ENCODE measurements at regions of chr1 and their contacts with region 1.

Region 1: DNA sequence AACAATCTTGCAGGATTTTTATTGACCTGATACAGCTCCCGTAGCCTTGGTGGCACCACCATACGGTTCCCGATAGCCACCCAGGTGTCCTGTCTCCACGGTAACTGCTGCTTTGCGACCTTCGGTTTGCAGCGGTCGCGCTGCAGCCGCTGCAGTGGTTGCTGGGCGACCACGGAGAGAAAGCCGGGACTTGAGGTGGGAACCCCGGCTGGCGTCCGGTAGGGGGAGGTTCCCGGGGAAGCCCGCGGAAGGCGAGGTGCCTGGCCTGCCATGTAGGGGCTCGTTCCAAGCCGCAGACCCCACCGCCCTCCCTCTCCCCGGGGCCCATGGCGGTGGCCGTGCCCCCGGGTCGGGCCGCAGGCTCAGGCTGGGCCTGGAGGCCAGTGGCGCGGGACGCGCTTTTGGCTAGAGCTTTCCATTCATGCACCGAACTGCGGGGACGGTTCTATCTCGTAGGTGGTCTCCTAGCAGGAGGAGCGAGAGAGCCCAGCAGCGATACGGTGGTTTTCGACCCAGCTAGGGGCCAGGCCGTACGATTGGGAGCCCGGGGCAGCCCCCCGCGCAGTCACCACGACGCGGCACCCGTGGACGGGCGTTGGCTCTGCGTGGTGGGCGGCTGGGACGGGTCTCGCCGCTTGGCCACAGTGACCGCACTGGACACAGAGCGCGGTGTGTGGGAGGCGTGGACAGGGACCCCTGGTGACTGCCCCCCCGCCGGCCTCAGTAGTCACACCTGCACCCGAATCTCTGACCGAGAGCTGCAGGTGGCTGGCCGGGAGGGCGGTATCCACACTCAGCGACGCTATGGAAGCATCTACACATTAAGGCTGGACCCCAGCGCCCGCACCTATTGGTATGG is at the start of gene KLHDC9:
- DNase-seq: peak; percentile 51 to 81 (median 64)
- H3K4me3 ChIP-seq: peak within 1 kb of the TSS; percentile 85
- H3K4me3 Mint-ChIP-seq: peak within 1 kb of the TSS; percentile 83 to 92 (median 86)
- H3K27ac ChIP-seq: peak within 1 kb of the TSS; percentile 32
- H3K27ac Mint-ChIP-seq: peak within 1 kb of the TSS; percentile 77 to 99 (median 96)
- H3K4me1 ChIP-seq: peaks cover 8% of the 10 kb centered on the region
- H3K4me1 Mint-ChIP-seq: peaks cover 17 to 26% (median 19%) of the 10 kb centered on the region in 3 donors
- H3K27me3 ChIP-seq: no peaks in the 10 kb centered on the region
- H3K27me3 Mint-ChIP-seq: peaks cover 0 to 19% of the 10 kb centered on the region in 2 donors
- total RNA-seq, gene KLHDC9: 0.42 to 0.49 TPM

Region 2: DNA sequence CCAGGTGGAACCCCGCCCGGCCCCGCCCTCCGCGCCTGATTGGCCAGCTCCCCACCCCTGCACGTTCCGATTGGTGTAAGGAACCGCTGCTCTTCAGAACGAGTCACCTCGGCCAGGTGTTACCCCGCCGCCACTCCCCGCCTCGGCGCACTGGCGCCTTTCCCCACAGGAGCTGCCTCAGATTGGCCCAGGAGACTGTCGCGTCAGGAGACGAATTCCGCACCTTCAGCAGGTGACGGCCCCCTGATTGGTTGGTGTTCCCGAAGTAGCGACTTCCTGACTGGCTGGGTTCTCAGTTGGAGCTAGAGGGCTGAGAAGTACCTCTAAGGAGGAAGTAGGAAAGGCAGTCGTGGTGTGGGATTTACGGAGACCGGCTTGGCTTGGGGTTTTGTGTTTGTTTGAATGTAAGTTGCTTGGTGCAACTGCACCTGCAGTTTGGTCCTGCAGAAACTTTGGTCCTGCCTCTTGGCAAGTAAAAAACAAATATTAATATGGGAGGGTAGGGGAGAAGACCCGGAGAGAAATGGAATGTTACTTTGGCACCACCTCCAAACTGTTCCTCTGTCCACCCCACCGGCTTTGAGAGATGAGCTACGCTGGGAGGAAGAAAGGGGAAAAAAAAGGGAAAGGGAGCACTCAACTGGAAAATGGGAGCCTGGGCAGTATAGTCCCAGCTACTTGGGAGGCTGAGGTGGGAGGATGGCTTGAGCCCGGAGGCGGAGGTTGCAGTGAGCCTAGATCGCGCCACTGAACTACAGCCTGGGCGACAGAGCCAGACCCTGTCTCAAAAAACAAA is 77.1 kb before region 1 on chr1:
- CTCF ChIA-PET with region 1: interaction called, 15 read pairs
- POLR2A ChIA-PET with region 1: interaction called, 3 read pairs
- DNase-seq: peak; percentile 85 to 95 (median 91)
- H3K4me3 ChIP-seq: peak overlapping the region; percentile 99
- H3K4me3 Mint-ChIP-seq: peak overlapping the region; percentile 85 to 94 (median 91)
- H3K27ac ChIP-seq: peak overlapping the region; percentile 71
- H3K27ac Mint-ChIP-seq: peak overlapping the region; percentile 66 to 97 (median 95)
- H3K4me1 ChIP-seq: peaks cover 26% of the 10 kb centered on the region
- H3K4me1 Mint-ChIP-seq: peaks cover 19 to 60% (median 40%) of the 10 kb centered on the region in 3 donors
- H3K27me3 ChIP-seq: no peaks in the 10 kb centered on the region
- H3K27me3 Mint-ChIP-seq: no peaks in the 10 kb centered on the region

Region 3: DNA sequence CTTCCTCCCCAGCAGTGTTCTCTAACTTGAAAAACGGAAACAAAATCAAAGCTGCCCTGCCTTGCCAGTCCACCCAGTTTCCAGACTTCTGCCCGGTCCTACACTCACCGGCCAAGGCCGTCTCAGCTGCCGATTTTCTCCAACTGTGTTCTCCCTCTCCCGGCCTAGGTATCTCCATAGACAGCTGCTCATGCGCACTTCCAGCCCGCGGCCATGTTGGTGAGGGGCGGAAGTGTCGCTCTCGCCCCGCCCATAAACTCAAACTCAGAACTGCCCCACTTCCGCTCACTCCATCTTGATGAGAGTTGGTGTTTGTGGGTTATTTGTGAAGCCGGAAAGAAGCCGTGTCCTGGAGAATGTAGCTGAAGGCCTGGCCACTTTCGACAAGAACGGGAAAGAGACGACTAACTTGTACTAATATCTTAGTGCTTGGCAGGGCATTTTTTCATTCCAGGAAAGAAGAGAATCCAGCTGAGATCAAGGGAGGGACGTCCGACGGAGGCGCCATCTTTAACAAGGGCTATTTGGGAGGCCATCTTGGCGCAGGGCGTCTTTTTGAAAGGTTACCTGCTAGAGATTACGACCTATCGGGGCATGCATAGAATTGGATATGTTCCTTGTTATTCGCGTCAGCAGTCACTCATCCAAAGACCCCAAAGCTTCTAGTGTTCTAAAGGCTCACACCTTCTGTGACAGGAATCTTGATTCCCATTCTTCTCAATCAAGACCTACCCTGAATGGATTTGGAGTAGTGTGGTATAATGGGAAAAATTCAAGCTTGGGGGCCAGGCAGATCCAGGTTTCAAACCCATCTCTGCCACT is 52.5 kb before region 1 on chr1 and contains the start of gene USF1:
- CTCF ChIA-PET with region 1: interaction called, 83 read pairs
- POLR2A ChIA-PET with region 1: interaction called, 34 read pairs
- DNase-seq: peak; percentile 85 to 96 (median 93)
- H3K4me3 ChIP-seq: peak within 1 kb of the TSS; percentile 99
- H3K4me3 Mint-ChIP-seq: peak within 1 kb of the TSS; percentile 88 to 97 (median 92)
- H3K27ac ChIP-seq: peak within 1 kb of the TSS; percentile 94
- H3K27ac Mint-ChIP-seq: peak within 1 kb of the TSS; percentile 89 to 100 (median 99)
- H3K4me1 ChIP-seq: peaks cover 23% of the 10 kb centered on the region
- H3K4me1 Mint-ChIP-seq: peaks cover 32 to 62% (median 49%) of the 10 kb centered on the region in 3 donors
- H3K27me3 ChIP-seq: no peaks in the 10 kb centered on the region
- H3K27me3 Mint-ChIP-seq: no peaks in the 10 kb centered on the region
- total RNA-seq, gene USF1: 63.3 to 67.7 TPM

Region 4: GRCh38 chr1:161071886-161072371 is 26.5 kb before region 1 on chr1:
- CTCF ChIA-PET with region 1: interaction called, 128 read pairs
- POLR2A ChIA-PET with region 1: interaction called, 31 read pairs
- DNase-seq: peak in 4 of 5 donors; percentile 24 to 66 (median 41)
- H3K4me3 ChIP-seq: no peak overlapping the region
- H3K4me3 Mint-ChIP-seq: peak overlapping the region in 1 of 7 donors; percentile 59
- H3K27ac ChIP-seq: no peak overlapping the region
- H3K27ac Mint-ChIP-seq: peak overlapping the region in 7 of 8 donors; percentile 17 to 88 (median 70)
- H3K4me1 ChIP-seq: peaks cover 34% of the 10 kb centered on the region
- H3K4me1 Mint-ChIP-seq: peaks cover 33 to 42% (median 41%) of the 10 kb centered on the region in 3 donors
- H3K27me3 ChIP-seq: no peaks in the 10 kb centered on the region
- H3K27me3 Mint-ChIP-seq: peaks cover 0 to 2% of the 10 kb centered on the region in 2 donors

Region 5: DNA sequence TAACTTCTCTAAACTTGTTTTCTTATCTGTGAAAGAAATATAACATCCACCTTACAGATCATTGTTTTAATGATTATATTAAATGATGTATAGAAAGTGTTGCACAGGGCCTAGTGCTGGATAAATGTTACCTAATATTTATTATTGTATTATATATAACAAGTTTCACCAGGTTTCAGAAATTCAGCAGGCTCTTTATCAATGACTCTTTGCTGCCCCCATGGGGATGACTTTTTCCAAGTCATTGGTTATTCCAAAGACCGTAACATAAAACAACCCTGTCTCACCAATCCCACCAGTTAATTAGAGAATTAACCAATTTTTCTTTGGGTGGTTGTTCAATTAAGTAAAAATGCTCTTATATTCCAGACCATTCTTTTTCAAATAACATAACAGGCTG is 41.3 kb after region 1 on chr1:
- CTCF ChIA-PET with region 1: interaction called, 24 read pairs
- POLR2A ChIA-PET with region 1: interaction called, 4 read pairs
- DNase-seq: peak in 2 of 5 donors; percentile 18 to 48
- H3K4me3 ChIP-seq: no peak overlapping the region
- H3K4me3 Mint-ChIP-seq: no peak overlapping the region
- H3K27ac ChIP-seq: no peak overlapping the region
- H3K27ac Mint-ChIP-seq: no peak overlapping the region
- H3K4me1 ChIP-seq: no peaks in the 10 kb centered on the region
- H3K4me1 Mint-ChIP-seq: peaks cover 4 to 8% (median 6%) of the 10 kb centered on the region in 3 donors
- H3K27me3 ChIP-seq: no peaks in the 10 kb centered on the region
- H3K27me3 Mint-ChIP-seq: no peaks in the 10 kb centered on the region

Region 6: GRCh38 chr1:161374373-161374772 is 275.9 kb after region 1 on chr1:
- CTCF ChIA-PET with region 1: no interaction called
- POLR2A ChIA-PET with region 1: no interaction called
- DNase-seq: no peak
- H3K4me3 ChIP-seq: no peak overlapping the region
- H3K4me3 Mint-ChIP-seq: no peak overlapping the region
- H3K27ac ChIP-seq: no peak overlapping the region
- H3K27ac Mint-ChIP-seq: peak overlapping the region in 1 of 8 donors; percentile 80
- H3K4me1 ChIP-seq: no peaks in the 10 kb centered on the region
- H3K4me1 Mint-ChIP-seq: no peaks in the 10 kb centered on the region
- H3K27me3 ChIP-seq: no peaks in the 10 kb centered on the region
- H3K27me3 Mint-ChIP-seq: no peaks in the 10 kb centered on the region